ENCODE measurements at regions of chr2 and their contacts with region 1.

Region 1: GRCh38 chr2:32772638-32773447 is 145.0 kb downstream of the TTC27 start:
- DNase-seq: peak; percentile 23
- H3K4me3 ChIP-seq: no peak overlapping the region
- H3K27ac ChIP-seq: no peak overlapping the region
- H3K27me3 ChIP-seq: no peaks in the 10 kb centered on the region
- CTCF ChIP-seq: peak; percentile 73

Region 2: GRCh38 chr2:32189011-32189410 is 583.8 kb before region 1 on chr2:
- CTCF ChIA-PET with region 1: no interaction called
- POLR2A ChIA-PET with region 1: no interaction called
- DNase-seq: no peak
- H3K4me3 ChIP-seq: no peak overlapping the region
- H3K27ac ChIP-seq: no peak overlapping the region
- H3K27me3 ChIP-seq: no peaks in the 10 kb centered on the region
- CTCF ChIP-seq: no peak

Region 3: DNA sequence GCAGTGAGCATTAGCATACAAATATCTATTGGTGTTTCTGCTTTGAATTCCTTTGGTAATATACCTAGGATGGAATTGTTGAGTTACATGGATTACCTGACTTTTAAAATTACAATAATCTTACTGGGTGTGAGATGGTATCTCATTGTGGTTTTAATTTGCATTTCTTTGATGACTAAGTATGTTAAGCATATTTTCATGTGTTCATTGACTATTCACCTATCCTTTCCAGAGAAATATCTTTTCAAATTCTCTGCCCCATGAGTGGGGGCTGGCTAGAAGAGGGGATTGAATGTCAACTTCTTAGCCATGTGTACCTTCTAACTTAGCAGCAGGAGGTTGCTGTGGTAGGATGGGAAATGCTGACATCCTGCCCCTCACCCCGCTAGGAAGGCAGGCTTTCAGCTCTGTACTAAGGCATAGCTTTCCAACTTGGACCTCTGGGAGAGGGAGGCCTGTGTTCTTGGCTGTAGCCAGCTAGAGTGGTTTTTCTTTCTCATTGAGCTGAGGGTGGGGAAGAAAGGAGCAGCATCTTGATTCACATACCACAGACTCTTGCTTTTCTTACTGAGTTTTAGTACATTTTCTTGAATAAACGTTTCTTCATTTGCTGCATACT is 208.3 kb before region 1 on chr2:
- CTCF ChIA-PET with region 1: no interaction called
- POLR2A ChIA-PET with region 1: no interaction called
- DNase-seq: no peak
- H3K4me3 ChIP-seq: no peak overlapping the region
- H3K27ac ChIP-seq: no peak overlapping the region
- H3K27me3 ChIP-seq: no peaks in the 10 kb centered on the region
- CTCF ChIP-seq: no peak

Region 4: GRCh38 chr2:32783469-32783868 is 10.6 kb after region 1 on chr2:
- CTCF ChIA-PET with region 1: no interaction called
- POLR2A ChIA-PET with region 1: no interaction called
- DNase-seq: no peak
- H3K4me3 ChIP-seq: no peak overlapping the region
- H3K27ac ChIP-seq: no peak overlapping the region
- H3K27me3 ChIP-seq: no peaks in the 10 kb centered on the region
- CTCF ChIP-seq: no peak

Region 5: GRCh38 chr2:32798829-32799228 is 26.0 kb after region 1 on chr2:
- CTCF ChIA-PET with region 1: no interaction called
- POLR2A ChIA-PET with region 1: no interaction called
- DNase-seq: peak; percentile 47
- H3K4me3 ChIP-seq: no peak overlapping the region
- H3K27ac ChIP-seq: no peak overlapping the region
- H3K27me3 ChIP-seq: no peaks in the 10 kb centered on the region
- CTCF ChIP-seq: no peak

Region 6: GRCh38 chr2:33033606-33034081 is 260.8 kb after region 1 on chr2:
- CTCF ChIA-PET with region 1: interaction called, 55 read pairs
- POLR2A ChIA-PET with region 1: no interaction called
- DNase-seq: peak; percentile 15
- H3K4me3 ChIP-seq: peak overlapping the region; percentile 48
- H3K27ac ChIP-seq: no peak overlapping the region
- H3K27me3 ChIP-seq: no peaks in the 10 kb centered on the region
- CTCF ChIP-seq: peak; percentile 67